ENCODE measurements at regions of chr5 and their contacts with region 1.

Region 1: DNA sequence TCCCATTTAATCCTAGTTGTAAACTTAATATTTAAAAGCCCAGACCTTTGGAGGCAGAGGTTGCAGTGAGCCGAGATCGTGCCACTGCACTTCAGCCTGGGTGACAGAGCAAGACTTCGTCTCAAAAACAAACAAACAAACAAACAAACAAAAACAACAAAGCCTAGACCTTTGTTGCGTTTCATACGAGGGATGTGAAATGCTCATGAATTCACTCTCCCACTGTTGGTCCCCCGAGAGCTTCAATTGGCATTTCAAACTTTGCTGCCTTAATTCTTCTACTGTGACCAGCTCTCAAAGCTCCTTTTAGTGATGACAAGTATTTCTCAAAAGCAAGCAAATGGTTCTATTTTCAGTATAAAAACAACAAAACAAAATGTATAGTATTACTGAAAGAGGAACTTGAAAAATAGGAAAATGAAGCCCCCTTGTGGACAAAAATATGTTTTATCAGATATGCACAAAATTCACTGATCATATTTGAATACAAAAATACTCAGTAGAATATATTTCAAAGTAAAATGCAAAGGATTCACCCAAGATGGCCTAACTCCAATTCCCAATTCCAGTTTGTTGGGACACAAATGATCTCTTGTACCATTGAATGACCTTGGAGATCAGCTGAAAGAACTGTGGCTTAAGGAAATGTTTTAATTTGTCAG is 140.4 kb downstream of the ESM1 start:
- DNase-seq: peak; percentile 4
- ATAC-seq: peak; percentile 50; the same call in 2 of the 3 replicates
- H3K4me3 ChIP-seq: no peak overlapping the region
- H3K27ac ChIP-seq: no peak overlapping the region
- H3K4me1 ChIP-seq: no peaks in the 10 kb centered on the region
- H3K27me3 ChIP-seq: no peaks in the 10 kb centered on the region
- CTCF ChIP-seq: peak in 1 of 3 experiments; percentile 50; a peak in 3 of 6 replicates
- EP300 ChIP-seq: no peak
- POLR2A ChIP-seq: no peak
- RAD21 ChIP-seq: peak; percentile 68

Region 2: DNA sequence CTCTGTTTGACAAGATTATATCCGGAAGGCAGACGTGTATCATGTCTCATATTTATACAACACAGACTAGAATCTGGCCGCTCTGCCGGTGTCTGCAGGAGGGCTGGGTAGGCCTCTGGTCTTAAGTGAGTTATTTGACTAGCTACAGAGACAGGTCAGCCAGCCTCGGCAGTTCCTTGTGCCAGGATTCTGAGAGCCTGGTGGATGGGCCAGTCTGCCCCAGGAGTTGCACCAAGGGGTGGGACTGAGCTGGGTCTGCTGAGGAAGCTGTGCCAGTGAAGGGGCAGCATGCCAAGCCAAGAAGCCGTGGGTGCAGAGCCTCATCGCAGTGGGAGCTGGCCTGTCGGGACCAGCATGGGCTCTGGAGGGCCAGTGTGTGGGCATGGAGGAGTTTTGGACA is 320.3 kb before region 1 on chr5:
- CTCF ChIA-PET with region 1: interaction called, 13 read pairs
- POLR2A ChIA-PET with region 1: no interaction called
- RAD21 ChIA-PET with region 1: interaction called, 3 read pairs
- SMC1A ChIA-PET with region 1: interaction called, 3 read pairs
- in situ Hi-C with region 1: loop called (anchors 5 kb)
- intact Hi-C with region 1: no loop called
- DNase-seq: no peak
- ATAC-seq: no peak
- H3K4me3 ChIP-seq: no peak overlapping the region
- H3K27ac ChIP-seq: no peak overlapping the region
- H3K4me1 ChIP-seq: no peaks in the 10 kb centered on the region
- H3K27me3 ChIP-seq: no peaks in the 10 kb centered on the region
- CTCF ChIP-seq: no peak
- EP300 ChIP-seq: no peak
- POLR2A ChIP-seq: no peak
- RAD21 ChIP-seq: no peak

Region 3: GRCh38 chr5:54867310-54867944 is 22.4 kb after region 1 on chr5:
- CTCF ChIA-PET with region 1: interaction called, 26 read pairs
- POLR2A ChIA-PET with region 1: no interaction called
- RAD21 ChIA-PET with region 1: interaction called, 9 read pairs
- SMC1A ChIA-PET with region 1: interaction called, 4 read pairs
- in situ Hi-C with region 1: no loop called
- intact Hi-C with region 1: loop called (anchors 1 kb)
- DNase-seq: no peak
- ATAC-seq: peak; percentile 38; the same call in 1 of the 3 replicates
- H3K4me3 ChIP-seq: no peak overlapping the region
- H3K27ac ChIP-seq: no peak overlapping the region
- H3K4me1 ChIP-seq: no peaks in the 10 kb centered on the region
- H3K27me3 ChIP-seq: peaks cover 2 to 4% of the 10 kb centered on the region in 2 experiments; a peak in 2 of 4 replicates
- CTCF ChIP-seq: peak; percentile 36 to 47 (median 46); a peak in 5 of 6 replicates
- EP300 ChIP-seq: no peak
- POLR2A ChIP-seq: no peak
- RAD21 ChIP-seq: peak; percentile 56

Region 4: GRCh38 chr5:54874373-54874921 is 29.4 kb after region 1 on chr5:
- CTCF ChIA-PET with region 1: interaction called, 11 read pairs
- POLR2A ChIA-PET with region 1: no interaction called
- RAD21 ChIA-PET with region 1: no interaction called
- SMC1A ChIA-PET with region 1: interaction called, 4 read pairs
- in situ Hi-C with region 1: no loop called
- intact Hi-C with region 1: no loop called
- DNase-seq: no peak
- ATAC-seq: no peak
- H3K4me3 ChIP-seq: no peak overlapping the region
- H3K27ac ChIP-seq: no peak overlapping the region
- H3K4me1 ChIP-seq: no peaks in the 10 kb centered on the region
- H3K27me3 ChIP-seq: peaks cover 0 to 5% of the 10 kb centered on the region in 2 experiments; a peak in 2 of 4 replicates
- CTCF ChIP-seq: no peak
- EP300 ChIP-seq: no peak
- POLR2A ChIP-seq: no peak
- RAD21 ChIP-seq: no peak

Region 5: DNA sequence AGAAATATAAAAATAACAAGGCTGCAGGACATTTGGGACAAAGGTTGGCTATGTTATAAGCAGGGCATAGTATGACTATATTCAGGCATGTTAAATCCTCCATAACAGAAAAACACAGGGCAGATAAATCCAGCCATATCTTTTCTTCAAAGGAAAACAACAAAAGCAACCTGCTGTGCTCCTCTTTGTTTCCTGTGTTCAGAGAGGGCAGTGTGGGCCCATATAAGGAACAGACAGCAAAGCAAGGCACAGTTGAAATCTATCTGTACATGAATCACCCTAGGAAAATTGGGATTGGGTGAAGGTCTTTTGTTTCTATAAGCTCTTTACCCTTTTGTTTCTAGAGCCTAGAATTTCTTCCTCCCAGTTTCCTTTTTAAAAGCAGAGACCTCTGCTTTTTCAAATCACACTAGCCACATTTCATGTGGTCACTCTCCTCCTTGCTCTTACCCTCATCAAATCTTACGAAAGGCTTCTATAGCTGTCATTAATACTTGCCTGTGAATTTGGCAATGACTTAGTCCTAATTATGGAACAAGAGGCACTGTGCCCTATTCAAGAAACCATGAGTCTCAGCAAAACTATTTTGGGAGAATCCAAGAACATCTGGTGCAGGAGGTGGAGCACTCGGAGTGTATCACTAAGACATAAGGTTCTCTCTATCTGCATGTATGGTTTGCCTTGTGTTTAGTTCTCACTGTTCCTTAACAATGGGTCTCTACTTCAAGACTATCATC is 259.2 kb after region 1 on chr5:
- CTCF ChIA-PET with region 1: no interaction called
- POLR2A ChIA-PET with region 1: no interaction called
- RAD21 ChIA-PET with region 1: no interaction called
- SMC1A ChIA-PET with region 1: no interaction called
- in situ Hi-C with region 1: no loop called
- intact Hi-C with region 1: no loop called
- DNase-seq: no peak
- ATAC-seq: no peak
- H3K4me3 ChIP-seq: no peak overlapping the region
- H3K27ac ChIP-seq: no peak overlapping the region
- H3K4me1 ChIP-seq: no peaks in the 10 kb centered on the region
- H3K27me3 ChIP-seq: no peaks in the 10 kb centered on the region
- CTCF ChIP-seq: no peak
- EP300 ChIP-seq: no peak
- POLR2A ChIP-seq: no peak
- RAD21 ChIP-seq: no peak